ENCODE measurements at regions of chr11 and their contacts with region 1.

Region 1: DNA sequence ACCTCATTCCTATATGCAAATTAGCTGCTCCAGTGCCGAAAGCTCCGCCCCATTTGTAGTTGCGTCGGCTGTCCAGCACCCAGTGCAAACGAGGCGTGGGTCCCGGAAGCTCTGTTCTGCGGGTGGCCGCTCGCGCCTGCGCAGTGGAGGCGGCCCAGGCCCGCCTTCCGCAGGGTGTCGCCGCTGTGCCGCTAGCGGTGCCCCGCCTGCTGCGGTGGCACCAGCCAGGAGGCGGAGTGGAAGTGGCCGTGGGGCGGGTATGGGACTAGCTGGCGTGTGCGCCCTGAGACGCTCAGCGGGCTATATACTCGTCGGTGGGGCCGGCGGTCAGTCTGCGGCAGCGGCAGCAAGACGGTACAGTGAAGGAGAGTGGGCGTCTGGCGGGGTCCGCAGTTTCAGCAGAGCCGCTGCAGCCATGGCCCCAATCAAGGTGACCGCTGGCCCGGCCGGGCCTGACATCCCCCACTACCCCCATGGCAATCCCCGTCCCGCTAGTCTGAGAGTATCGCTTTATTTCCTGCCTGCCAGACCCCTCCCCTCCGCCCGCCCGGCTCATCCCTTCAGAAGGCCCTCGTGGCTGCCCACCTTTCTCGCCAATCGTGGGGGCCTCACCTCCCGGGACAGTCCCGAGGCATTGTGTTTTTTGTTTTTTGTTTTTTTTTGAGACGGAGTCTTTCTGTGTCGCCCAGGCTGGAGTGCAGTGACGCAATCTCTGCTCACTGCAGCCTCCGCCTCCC is at the start of gene PRDX5:
- DNase-seq: peak; percentile 97
- ATAC-seq: peak; percentile 84
- H3K4me3 Mint-ChIP-seq: peak within 1 kb of the TSS; percentile 97
- H3K27ac Mint-ChIP-seq: peak within 1 kb of the TSS; percentile 99
- H3K4me1 Mint-ChIP-seq: peaks cover 26% of the 10 kb centered on the region
- H3K27me3 Mint-ChIP-seq: no peaks in the 10 kb centered on the region
- total RNA-seq, gene PRDX5: 110 to 142 TPM

Region 2: GRCh38 chr11:63986156-63986931 is 331.8 kb before region 1 on chr11 and contains the start of gene OTUB1:
- CTCF ChIA-PET with region 1: no interaction called
- POLR2A ChIA-PET with region 1: no interaction called
- intact Hi-C with region 1: loop called in 1 of 2 experiments (anchors 5 kb)
- DNase-seq: peak; percentile 94
- ATAC-seq: peak; percentile 92
- H3K4me3 Mint-ChIP-seq: peak within 1 kb of the TSS; percentile 93
- H3K27ac Mint-ChIP-seq: peak within 1 kb of the TSS; percentile 89
- H3K4me1 Mint-ChIP-seq: peaks cover 23% of the 10 kb centered on the region
- H3K27me3 Mint-ChIP-seq: no peaks in the 10 kb centered on the region
- total RNA-seq, gene OTUB1: 77.4 to 86.1 TPM

Region 3: GRCh38 chr11:64148200-64148916 is 169.8 kb before region 1 on chr11:
- CTCF ChIA-PET with region 1: no interaction called
- POLR2A ChIA-PET with region 1: no interaction called
- intact Hi-C with region 1: no loop called
- DNase-seq: peak; percentile 83
- ATAC-seq: peak; percentile 41
- H3K4me3 Mint-ChIP-seq: no peak overlapping the region
- H3K27ac Mint-ChIP-seq: no peak overlapping the region
- H3K4me1 Mint-ChIP-seq: peaks cover 11% of the 10 kb centered on the region
- H3K27me3 Mint-ChIP-seq: no peaks in the 10 kb centered on the region

Region 4: DNA sequence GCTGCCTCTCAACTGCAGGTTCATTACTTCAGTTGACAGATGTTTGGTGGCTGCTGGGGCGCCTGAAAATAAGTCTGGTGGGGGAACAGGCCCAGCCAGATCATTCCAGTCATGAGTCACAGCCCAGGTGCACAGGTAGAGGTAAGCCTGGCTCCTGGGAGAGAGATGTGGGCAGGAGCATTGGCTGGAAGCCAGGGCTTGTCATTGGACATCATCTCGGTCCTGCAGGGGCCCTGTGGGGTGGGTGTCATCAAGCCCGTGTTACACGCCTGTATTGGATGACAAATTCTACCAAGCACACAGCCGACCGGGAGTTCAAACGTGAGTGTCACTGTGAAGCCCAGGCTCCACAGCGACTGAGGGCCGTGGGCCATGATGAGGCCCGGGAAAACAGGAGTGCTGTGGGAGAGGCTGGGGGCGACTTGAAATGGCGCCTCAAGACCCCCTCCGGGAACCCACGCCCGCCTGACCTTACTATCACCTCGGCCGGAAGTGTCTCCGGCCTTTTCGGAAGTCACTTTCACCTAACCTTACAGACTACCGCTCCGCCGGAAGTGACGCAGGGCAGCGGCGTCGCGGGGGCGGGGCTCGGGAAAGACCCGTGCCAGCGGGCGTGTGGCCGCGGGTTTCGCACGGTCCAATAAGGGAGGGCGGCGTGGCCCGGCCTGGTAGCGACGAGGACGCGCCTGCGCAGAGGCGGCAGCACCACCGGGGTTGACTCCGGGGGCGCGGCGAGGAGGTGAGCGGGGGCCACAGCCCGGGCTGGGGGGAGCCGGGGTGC is 77.5 kb before region 1 on chr11 and contains the start of gene FKBP2:
- CTCF ChIA-PET with region 1: interaction called, 7 read pairs
- POLR2A ChIA-PET with region 1: no interaction called
- intact Hi-C with region 1: loop called in 1 of 2 experiments (anchors 1 kb)
- DNase-seq: peak; percentile 99
- ATAC-seq: peak; percentile 68
- H3K4me3 Mint-ChIP-seq: peak within 1 kb of the TSS; percentile 86
- H3K27ac Mint-ChIP-seq: peak within 1 kb of the TSS; percentile 99
- H3K4me1 Mint-ChIP-seq: peaks cover 31% of the 10 kb centered on the region
- H3K27me3 Mint-ChIP-seq: no peaks in the 10 kb centered on the region
- total RNA-seq, gene FKBP2: 19.9 to 21.3 TPM

Region 5: GRCh38 chr11:64331557-64332371 is 13.6 kb after region 1 on chr11:
- CTCF ChIA-PET with region 1: interaction called, 33 read pairs
- POLR2A ChIA-PET with region 1: interaction called, 9 read pairs
- intact Hi-C with region 1: loop called in 1 of 2 experiments (anchors 1 kb)
- DNase-seq: peak; percentile 90
- ATAC-seq: peak; percentile 85
- H3K4me3 Mint-ChIP-seq: no peak overlapping the region
- H3K27ac Mint-ChIP-seq: peak overlapping the region; percentile 43
- H3K4me1 Mint-ChIP-seq: peaks cover 17% of the 10 kb centered on the region
- H3K27me3 Mint-ChIP-seq: no peaks in the 10 kb centered on the region

Region 6: GRCh38 chr11:64358907-64359711 is 41.0 kb after region 1 on chr11 and contains the start of gene RPS6KA4:
- CTCF ChIA-PET with region 1: interaction called, 4 read pairs
- POLR2A ChIA-PET with region 1: interaction called, 3 read pairs
- intact Hi-C with region 1: loop called (anchors 1 to 5 kb)
- DNase-seq: peak; percentile 80
- ATAC-seq: peak; percentile 69
- H3K4me3 Mint-ChIP-seq: peak within 1 kb of the TSS; percentile 85
- H3K27ac Mint-ChIP-seq: peak within 1 kb of the TSS; percentile 56
- H3K4me1 Mint-ChIP-seq: peaks cover 36% of the 10 kb centered on the region
- H3K27me3 Mint-ChIP-seq: no peaks in the 10 kb centered on the region
- total RNA-seq, gene RPS6KA4: 22.0 to 30.2 TPM

Region 7: DNA sequence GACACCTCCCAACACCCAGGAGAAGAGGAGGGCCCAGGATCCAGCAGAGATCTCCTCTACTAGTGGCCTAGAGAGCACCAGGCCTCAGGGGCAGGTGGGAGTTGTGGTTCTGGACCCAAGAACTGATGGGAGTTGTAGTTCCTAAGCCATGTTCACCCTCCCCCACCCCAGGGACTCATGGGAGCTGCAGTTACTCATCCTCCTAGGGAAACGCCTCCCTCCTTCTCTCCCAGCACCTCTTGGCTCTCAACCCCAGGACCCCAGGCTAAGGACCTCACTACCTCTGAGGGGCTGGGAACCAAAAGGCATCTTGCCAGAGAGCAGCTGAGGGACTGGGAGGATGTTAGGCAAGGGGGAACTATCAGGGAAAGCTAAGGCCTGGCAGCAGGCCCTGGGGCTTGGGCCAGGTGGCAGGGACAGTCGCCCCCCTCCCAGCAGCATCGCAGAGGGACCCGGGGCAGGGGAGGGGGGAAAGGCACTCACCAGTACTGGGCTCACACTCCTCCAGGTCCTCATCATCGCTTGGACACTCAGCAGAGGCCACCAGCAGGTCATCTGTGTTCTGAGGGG is 301.8 kb after region 1 on chr11:
- CTCF ChIA-PET with region 1: no interaction called
- POLR2A ChIA-PET with region 1: no interaction called
- intact Hi-C with region 1: no loop called
- DNase-seq: peak; percentile 54
- ATAC-seq: peak; percentile 75
- H3K4me3 Mint-ChIP-seq: no peak overlapping the region
- H3K27ac Mint-ChIP-seq: no peak overlapping the region
- H3K4me1 Mint-ChIP-seq: peaks cover 4% of the 10 kb centered on the region
- H3K27me3 Mint-ChIP-seq: no peaks in the 10 kb centered on the region